ENCODE measurements at regions of chr18 and their contacts with region 1.

Region 1: DNA sequence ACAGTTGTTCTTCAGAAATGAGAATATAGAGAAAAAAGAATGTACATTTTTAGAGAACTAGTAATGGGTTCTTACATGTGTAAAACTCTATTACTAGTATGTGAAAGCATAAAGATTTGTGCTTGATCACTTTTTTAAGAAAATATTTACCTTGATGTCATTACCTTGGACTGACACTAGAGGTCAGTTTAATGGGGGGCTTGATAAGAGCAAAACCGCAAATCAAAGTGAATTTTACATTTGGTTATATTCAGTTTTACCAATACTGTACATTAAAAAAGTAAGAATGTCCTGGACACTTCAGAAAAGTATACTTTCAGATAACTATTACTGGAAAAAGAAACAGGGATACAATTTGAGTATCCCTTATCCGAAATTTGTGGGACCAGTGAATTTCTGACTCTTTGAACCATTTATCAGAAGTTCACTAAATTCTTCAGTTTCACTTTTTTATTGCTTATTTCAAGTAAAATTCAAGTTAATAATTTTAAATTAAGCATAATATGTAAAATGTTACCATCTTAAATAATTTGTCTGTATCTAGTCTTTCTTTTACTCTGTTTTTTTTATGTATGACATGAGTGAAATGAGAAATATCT is 1149.5 kb downstream of the DSC3 start:
- DNase-seq: no peak
- H3K4me3 Mint-ChIP-seq: no peak overlapping the region
- H3K27ac Mint-ChIP-seq: no peak overlapping the region
- H3K4me1 Mint-ChIP-seq: no peaks in the 10 kb centered on the region
- H3K27me3 Mint-ChIP-seq: no peaks in the 10 kb centered on the region
- CTCF ChIP-seq: peak; percentile 79

Region 2: DNA sequence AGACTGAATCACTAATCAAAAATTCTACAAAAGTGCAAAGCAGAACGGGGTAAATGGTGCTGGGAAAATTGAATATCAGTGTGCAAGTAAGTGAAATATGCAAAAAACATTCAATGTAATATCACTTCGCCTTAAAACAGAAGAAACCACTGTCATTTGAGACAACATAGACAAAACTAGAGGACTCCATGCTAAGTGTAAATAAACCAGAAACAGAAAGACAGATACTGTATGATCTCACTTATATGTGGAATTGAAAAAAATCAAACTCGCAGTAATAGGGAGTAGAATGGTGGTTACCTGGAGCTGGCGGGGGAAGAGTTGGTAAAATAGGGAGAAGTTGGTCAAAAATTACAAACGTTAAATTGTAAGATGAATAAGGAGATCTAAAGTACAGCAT is 296.1 kb before region 1 on chr18:
- CTCF ChIA-PET with region 1: no interaction called
- intact Hi-C with region 1: no loop called
- DNase-seq: no peak
- H3K4me3 Mint-ChIP-seq: no peak overlapping the region
- H3K27ac Mint-ChIP-seq: no peak overlapping the region
- H3K4me1 Mint-ChIP-seq: no peaks in the 10 kb centered on the region
- H3K27me3 Mint-ChIP-seq: no peaks in the 10 kb centered on the region
- CTCF ChIP-seq: no peak

Region 3: GRCh38 chr18:29855637-29856036 is 37.4 kb before region 1 on chr18:
- CTCF ChIA-PET with region 1: no interaction called
- intact Hi-C with region 1: no loop called
- DNase-seq: no peak
- H3K4me3 Mint-ChIP-seq: no peak overlapping the region
- H3K27ac Mint-ChIP-seq: no peak overlapping the region
- H3K4me1 Mint-ChIP-seq: no peaks in the 10 kb centered on the region
- H3K27me3 Mint-ChIP-seq: no peaks in the 10 kb centered on the region
- CTCF ChIP-seq: no peak

Region 4: DNA sequence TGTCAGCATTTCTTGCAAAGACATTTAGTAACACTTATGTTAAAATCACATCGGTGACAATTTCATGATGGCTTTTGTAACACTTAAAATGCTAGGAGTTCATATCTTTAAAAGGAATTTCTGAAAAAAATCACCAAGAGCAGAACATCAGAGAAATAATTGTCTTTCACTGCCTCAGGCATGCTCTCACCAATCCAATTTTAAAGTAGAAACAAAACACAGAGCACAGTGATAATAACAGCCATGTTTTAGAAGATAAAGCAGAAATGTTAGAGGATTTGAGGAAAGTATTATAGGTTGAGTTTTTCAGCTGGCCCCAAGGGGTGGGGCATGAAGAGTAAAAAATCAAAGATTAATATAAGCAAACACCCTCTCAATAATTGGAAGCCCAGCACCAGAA is 111.9 kb after region 1 on chr18:
- CTCF ChIA-PET with region 1: no interaction called
- intact Hi-C with region 1: no loop called
- DNase-seq: no peak
- H3K4me3 Mint-ChIP-seq: no peak overlapping the region
- H3K27ac Mint-ChIP-seq: no peak overlapping the region
- H3K4me1 Mint-ChIP-seq: peaks cover under 1% of the 10 kb centered on the region
- H3K27me3 Mint-ChIP-seq: no peaks in the 10 kb centered on the region
- CTCF ChIP-seq: no peak

Region 5: DNA sequence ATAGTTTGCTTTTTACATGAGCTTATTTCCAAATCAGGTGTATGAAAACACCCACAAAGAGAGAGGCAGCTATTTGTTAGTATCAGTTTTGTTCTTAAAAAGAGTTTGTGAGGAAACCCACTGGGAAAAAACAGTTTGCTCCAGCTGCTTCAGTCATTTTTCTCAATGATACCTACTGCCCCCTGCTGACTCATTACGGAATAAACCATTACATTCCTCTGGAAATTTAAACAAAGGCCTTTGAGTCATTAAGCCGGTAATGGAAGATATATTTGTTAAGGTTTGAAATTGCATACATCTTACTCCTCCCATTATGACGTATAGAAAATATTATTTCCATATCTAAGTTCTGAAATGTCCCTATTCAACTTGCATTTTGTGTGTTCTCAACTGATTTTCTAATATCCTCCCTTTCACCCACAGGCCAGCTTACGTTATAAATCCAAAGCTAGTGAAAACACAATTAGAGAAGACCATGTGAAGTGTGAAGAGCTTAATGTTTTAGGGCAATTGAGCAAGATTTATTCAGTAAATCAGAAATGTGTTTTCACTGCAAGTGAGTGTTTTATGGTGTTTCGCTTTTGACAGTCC is 387.9 kb after region 1 on chr18:
- CTCF ChIA-PET with region 1: no interaction called
- intact Hi-C with region 1: loop called (anchors 5 kb)
- DNase-seq: peak; percentile 57
- H3K4me3 Mint-ChIP-seq: no peak overlapping the region
- H3K27ac Mint-ChIP-seq: no peak overlapping the region
- H3K4me1 Mint-ChIP-seq: no peaks in the 10 kb centered on the region
- H3K27me3 Mint-ChIP-seq: no peaks in the 10 kb centered on the region
- CTCF ChIP-seq: peak; percentile 53

Measured in Calu3 (cell line).